ENCODE measurements at regions of chr1 and their contacts with region 1.

Region 1: GRCh38 chr1:51768971-51769588 is 109.4 kb downstream of the NRDC start:
- DNase-seq: peak; percentile 72
- H3K4me3 Mint-ChIP-seq: no peak overlapping the region
- H3K27ac Mint-ChIP-seq: no peak overlapping the region
- H3K4me1 Mint-ChIP-seq: peaks cover 11% of the 10 kb centered on the region
- H3K27me3 Mint-ChIP-seq: no peaks in the 10 kb centered on the region

Region 2: DNA sequence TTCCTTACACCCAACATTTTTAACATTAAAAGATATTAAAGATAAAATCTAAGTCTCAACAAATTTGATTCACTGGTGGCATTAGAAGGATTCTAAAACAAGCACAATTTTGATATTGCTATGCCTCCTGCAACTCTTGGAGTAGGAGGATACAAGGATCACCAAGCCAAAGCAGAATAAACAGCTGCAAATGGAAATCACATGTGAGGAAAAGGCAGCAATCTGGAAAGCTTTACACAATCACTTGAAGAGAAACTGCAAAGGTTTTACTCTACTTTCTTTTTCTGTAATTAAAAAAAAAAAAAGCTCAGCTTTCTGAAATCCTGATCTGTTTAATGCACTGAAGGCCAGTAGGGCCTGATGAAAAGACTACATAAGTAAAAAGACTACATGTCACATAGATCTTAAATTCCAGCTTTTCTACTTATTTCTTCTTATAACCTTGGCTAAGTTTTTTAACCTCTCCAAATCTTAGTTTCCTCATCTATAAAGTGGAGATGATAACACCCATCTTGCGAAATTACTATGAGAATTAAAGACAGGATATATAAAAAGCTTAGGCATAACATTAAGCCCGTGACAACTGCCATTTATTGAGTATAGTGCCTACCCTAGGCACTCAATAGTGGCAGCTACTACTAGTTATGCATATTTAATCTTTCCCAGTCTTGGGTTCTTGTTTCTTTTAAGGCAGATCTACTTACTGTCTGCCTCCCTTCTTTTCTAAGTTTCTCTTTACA is 323.6 kb before region 1 on chr1:
- intact Hi-C with region 1: loop called (anchors 10 kb)
- DNase-seq: no peak
- H3K4me3 Mint-ChIP-seq: no peak overlapping the region
- H3K27ac Mint-ChIP-seq: no peak overlapping the region
- H3K4me1 Mint-ChIP-seq: peaks cover 20% of the 10 kb centered on the region
- H3K27me3 Mint-ChIP-seq: no peaks in the 10 kb centered on the region

Region 3: GRCh38 chr1:51627678-51628077 is 141.4 kb before region 1 on chr1:
- intact Hi-C with region 1: loop called (anchors 1 kb)
- DNase-seq: peak; percentile 62
- H3K4me3 Mint-ChIP-seq: no peak overlapping the region
- H3K27ac Mint-ChIP-seq: no peak overlapping the region
- H3K4me1 Mint-ChIP-seq: peaks cover 4% of the 10 kb centered on the region
- H3K27me3 Mint-ChIP-seq: no peaks in the 10 kb centered on the region